Kidney (tissue), 22 donors: ENCODE measurements at regions of chr2 and their contacts with region 1.

Region 1: GRCh38 chr2:181742922-181743722 is 62.8 kb upstream of the NEUROD1 start:
- DNase-seq: peak in 3 of 5 donors; percentile 36 to 83 (median 73)
- H3K4me3 ChIP-seq: peak overlapping the region in 2 of 3 donors; percentile 18 to 24
- H3K27ac ChIP-seq: no peak overlapping the region
- H3K4me1 ChIP-seq: peaks cover 0 to 9% (median 0%) of the 10 kb centered on the region in 3 donors
- H3K27me3 ChIP-seq: no peaks in the 10 kb centered on the region
- CTCF ChIP-seq: peak; percentile 68

Region 2: DNA sequence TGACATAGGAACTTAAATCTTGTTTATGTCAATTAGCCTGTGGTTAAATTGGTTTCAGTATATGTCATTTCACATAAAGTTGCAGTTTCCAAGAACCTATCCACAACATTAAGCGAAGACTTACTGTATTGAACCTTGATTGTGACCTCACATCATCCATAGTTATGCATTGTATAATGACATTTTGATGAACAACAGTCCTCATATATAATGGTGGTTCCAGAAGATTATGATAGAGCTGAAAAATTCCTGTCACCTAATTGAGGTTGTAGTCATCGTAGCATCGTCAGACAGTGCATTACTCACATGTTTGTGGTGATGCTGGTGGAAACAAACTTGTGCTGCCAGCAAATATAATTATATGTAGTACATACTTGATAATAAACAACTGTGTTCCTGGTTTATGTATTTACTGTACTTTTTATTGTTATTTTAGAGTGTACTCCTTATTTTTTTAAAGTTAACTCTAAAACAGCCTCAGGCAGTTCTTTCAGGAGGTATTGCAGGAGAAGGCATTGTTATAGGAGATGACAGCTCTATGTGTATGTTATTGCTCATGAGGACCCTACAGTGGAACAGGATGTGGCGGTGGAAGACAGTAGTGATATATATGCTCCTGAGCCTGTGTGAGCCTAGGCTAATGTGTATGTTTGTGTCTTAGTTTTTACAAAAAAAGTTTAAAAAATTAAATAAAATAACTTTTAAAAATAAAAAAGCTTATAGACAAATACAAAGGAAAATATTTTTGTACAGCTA is 706.1 kb before region 1 on chr2:
- intact Hi-C with region 1: no loop called
- DNase-seq: no peak
- H3K4me3 ChIP-seq: no peak overlapping the region
- H3K27ac ChIP-seq: no peak overlapping the region
- H3K4me1 ChIP-seq: no peaks in the 10 kb centered on the region
- H3K27me3 ChIP-seq: no peaks in the 10 kb centered on the region
- CTCF ChIP-seq: no peak

Region 3: GRCh38 chr2:181646415-181646987 is 96.6 kb before region 1 on chr2:
- intact Hi-C with region 1: no loop called
- DNase-seq: no peak
- H3K4me3 ChIP-seq: no peak overlapping the region
- H3K27ac ChIP-seq: no peak overlapping the region
- H3K4me1 ChIP-seq: no peaks in the 10 kb centered on the region
- H3K27me3 ChIP-seq: no peaks in the 10 kb centered on the region
- CTCF ChIP-seq: no peak

Region 4: DNA sequence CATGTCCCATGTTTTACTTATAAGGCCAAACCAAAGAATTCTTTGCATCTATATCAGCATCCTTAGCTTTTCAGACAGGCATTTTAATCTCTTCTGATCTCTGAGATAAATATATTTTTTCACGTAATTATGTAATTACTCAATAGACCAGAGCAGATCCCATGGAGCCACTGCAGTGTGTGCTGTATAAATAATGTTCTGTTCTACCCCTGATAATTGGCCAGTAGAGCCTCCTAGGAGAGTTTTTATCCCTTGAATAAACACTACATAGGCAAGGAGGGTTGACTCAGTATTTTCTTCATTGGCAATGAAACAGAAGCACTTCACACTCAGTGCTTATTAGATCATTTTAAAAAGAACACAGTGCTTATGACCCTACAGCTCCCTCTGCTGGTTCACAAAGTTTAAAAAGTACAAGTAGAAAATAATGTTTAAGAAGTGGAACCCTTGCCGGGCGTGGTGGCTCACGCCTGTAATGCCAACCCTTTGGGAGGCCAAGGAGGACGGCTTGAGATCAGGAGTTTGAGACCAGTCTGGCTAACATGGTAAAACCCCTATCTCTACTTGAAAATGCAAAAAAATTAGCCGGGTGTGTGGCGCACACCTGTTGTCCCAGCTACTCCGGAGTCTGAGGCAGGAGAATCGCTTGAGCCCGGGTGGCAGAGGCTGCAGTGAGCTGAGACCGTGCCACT is 334.5 kb after region 1 on chr2:
- intact Hi-C with region 1: loop called (anchors 10 kb)
- DNase-seq: peak in 4 of 5 donors; percentile 22 to 92 (median 60)
- H3K4me3 ChIP-seq: no peak overlapping the region
- H3K27ac ChIP-seq: no peak overlapping the region
- H3K4me1 ChIP-seq: peaks cover 0 to 2% (median 0%) of the 10 kb centered on the region in 3 donors
- H3K27me3 ChIP-seq: no peaks in the 10 kb centered on the region
- CTCF ChIP-seq: peak; percentile 55